ENCODE measurements at regions of chr6 and their contacts with region 1.

Region 1: GRCh38 chr6:24933868-24934401 is 1.8 kb downstream of the RIPOR2 start:
- H3K4me3 ChIP-seq: no peak overlapping the region
- H3K27ac ChIP-seq: no peak overlapping the region
- H3K4me1 ChIP-seq: no peaks in the 10 kb centered on the region
- CTCF ChIP-seq: no peak

Region 2: DNA sequence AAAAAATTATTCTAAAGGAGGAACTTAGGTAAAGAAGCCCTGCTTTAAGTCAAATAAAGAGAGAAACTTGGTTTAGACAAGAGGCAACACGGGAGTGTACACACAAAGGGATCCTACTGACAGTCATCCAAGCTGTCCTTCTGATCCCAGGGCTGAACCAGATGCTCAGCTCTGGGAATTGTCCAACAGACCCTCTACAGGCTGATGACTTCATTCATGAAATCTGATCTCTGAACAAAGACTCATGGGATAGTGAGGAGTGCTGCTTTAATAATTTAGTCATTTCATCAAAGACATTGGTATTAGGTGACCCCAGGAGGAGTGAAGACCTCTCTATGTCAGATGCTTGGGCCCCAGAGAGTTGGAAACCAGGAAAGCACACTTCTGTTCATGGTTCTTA is 69.6 kb before region 1 on chr6:
- CTCF ChIA-PET with region 1: interaction called, 10 read pairs
- POLR2A ChIA-PET with region 1: no interaction called
- H3K4me3 ChIP-seq: no peak overlapping the region
- H3K27ac ChIP-seq: no peak overlapping the region
- H3K4me1 ChIP-seq: no peaks in the 10 kb centered on the region
- CTCF ChIP-seq: no peak

Region 3: DNA sequence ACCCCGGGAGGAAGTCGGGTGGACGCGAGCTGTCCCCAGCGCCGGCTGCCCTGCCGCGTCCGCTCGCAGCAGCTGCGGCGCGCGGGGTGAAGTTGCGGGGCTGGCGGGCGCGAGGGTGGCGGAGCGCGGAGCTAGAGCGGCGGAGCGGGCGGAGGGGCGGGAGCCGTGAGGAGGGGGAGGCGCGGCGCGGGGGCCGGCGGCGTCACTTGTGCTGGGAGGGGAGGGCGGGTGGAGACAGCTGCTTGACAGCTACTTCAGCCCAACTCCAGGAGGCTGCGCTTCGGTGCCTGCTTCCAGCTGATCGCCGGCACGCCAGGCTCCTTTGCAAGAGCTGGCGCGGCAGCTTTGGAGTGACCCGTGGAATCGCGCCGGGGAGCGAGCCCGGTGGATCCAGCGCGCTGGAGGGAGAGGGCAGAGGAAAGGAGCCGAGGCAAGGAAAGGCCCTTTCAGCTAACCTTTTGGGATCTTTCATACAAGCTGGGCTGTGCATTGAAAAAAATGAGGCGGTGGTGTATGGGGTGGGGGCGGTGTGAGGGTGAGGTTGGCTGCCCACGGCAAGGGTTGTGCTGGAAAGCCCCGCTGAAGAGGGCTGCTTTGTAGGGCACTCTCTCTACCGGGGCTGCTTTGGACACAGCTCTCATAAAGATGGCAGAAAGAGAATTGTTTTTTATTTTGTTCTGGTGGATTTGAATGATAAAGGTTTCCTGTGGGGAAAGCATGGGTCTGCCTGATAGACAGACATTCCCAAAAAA is 22.8 kb before region 1 on chr6:
- CTCF ChIA-PET with region 1: interaction called, 10 read pairs
- POLR2A ChIA-PET with region 1: no interaction called
- H3K4me3 ChIP-seq: peak overlapping the region; percentile 65
- H3K27ac ChIP-seq: no peak overlapping the region; the same call in 1 of the 2 replicates
- H3K4me1 ChIP-seq: peaks cover 17% of the 10 kb centered on the region
- CTCF ChIP-seq: no peak

Region 4: DNA sequence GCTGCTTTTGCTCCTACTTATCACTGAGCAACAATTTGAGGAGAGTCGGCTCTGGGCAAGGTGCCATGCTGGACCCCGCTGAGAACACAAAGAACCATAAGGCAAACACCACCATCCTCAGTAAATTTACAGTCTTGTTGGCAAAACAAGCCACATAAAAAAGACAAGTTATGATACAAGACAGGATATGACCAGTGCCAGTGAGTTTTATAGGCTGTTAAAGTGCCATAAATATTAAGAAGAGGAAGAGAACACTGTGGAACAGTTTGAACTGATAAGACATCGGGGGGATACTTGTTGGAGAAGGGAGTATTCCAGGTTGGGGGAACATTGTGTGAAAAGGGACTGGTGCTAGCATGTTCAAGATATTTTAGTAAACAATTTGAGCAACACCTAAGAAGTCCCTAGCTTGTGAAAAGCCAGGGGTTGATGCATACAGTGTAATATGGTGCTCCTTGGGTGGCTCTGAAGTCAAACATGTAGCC is 27.1 kb after region 1 on chr6:
- CTCF ChIA-PET with region 1: interaction called, 17 read pairs
- POLR2A ChIA-PET with region 1: interaction called, 5 read pairs
- H3K4me3 ChIP-seq: no peak overlapping the region
- H3K27ac ChIP-seq: no peak overlapping the region
- H3K4me1 ChIP-seq: peaks cover 6% of the 10 kb centered on the region; the same call in 1 of the 2 replicates
- CTCF ChIP-seq: no peak

Region 5: DNA sequence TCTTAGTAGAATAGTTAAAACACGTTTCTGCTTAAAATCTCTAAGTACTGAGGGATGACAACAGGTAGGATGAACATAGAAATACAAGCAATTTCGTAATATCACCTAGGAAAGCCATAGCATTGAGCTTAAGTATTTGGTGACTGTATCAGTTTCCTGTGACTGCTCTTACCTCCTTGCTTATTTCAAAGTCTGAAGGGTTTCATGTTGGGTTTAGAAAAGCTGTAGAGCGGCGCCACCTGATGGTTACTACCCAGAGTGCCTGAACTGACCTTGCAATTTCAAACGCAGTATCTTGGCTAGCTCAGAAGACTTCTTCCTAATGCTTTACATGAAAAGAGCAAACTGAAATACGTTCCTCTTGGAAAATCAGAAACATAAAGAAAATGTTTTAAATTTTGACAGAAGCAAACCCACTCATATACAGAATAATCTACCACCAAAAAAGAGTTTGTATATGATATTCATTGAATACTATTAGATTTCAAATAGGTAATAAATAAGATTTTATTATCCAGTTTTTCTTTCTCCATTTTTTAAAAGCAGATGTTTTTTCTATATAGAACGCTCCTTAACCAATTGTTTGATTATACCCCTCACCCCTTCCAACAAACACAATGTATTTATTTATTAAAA is 84.1 kb after region 1 on chr6:
- CTCF ChIA-PET with region 1: interaction called, 10 read pairs
- POLR2A ChIA-PET with region 1: no interaction called
- H3K4me3 ChIP-seq: no peak overlapping the region
- H3K27ac ChIP-seq: no peak overlapping the region
- H3K4me1 ChIP-seq: no peaks in the 10 kb centered on the region
- CTCF ChIP-seq: no peak; the same call in 1 of the 2 replicates

Region 6: DNA sequence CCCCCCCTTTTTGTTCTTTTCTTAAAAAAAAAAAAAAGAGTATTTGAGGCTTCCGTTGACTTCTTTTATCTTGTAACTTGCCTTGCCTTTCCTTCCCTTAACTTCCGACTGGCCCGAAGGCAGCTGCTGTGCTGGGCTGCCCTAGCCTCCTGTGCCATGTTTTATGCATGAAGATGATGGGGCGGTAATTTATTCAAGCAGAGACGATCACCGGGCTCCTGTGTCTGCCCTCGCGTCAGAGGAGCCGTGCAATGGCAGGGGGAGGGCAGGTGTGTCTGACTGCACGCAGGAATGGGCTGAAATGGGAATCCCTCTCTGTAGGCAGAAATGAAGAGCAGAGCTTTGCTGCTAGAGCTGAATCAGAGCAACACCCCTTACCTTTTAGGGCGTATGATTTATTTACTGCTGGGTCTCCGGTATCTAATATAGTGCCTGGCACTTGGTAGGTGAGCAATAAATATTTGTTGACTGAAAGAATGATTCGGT is 108.1 kb after region 1 on chr6:
- CTCF ChIA-PET with region 1: no interaction called
- POLR2A ChIA-PET with region 1: no interaction called
- H3K4me3 ChIP-seq: no peak overlapping the region
- H3K27ac ChIP-seq: no peak overlapping the region
- H3K4me1 ChIP-seq: no peaks in the 10 kb centered on the region
- CTCF ChIP-seq: no peak